Mammary epithelial cell (primary cell): ENCODE measurements at regions of chr5 and their contacts with region 1.

Region 1: GRCh38 chr5:8908055-8908683 is 637.7 kb downstream of the SEMA5A start:
- DNase-seq: peak; percentile 17
- H3K4me3 ChIP-seq: no peak overlapping the region
- H3K27ac ChIP-seq: peak overlapping the region; percentile 100
- H3K4me1 ChIP-seq: peaks cover 42% of the 10 kb centered on the region
- H3K27me3 ChIP-seq: no peaks in the 10 kb centered on the region
- CTCF ChIP-seq: peak; percentile 74 to 89

Region 2: DNA sequence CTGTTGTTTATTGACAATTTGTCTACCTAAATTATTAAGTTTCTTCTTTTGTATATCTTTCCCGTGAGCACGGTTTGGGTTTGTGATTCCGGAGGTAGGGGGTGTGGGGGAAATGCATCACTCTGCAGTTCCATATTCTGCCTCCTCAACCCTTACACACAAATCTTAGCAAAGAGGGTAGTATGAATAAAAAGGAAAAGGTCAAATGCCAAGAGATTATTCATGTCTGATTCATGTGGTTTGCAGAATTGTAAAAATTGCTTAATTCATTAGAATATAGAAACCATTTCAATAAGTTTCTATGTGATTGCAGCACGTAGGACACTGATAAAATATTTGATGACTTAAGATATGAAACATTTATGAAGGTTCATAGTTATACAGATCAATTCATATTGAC is 35.8 kb after region 1 on chr5:
- CTCF ChIA-PET with region 1: no interaction called
- dilution Hi-C with region 1: no loop called
- in situ Hi-C with region 1: no loop called
- intact Hi-C with region 1: loop called (anchors 2 kb)
- DNase-seq: peak; percentile 51
- H3K4me3 ChIP-seq: no peak overlapping the region
- H3K27ac ChIP-seq: no peak overlapping the region
- H3K4me1 ChIP-seq: peaks cover 9% of the 10 kb centered on the region
- H3K27me3 ChIP-seq: no peaks in the 10 kb centered on the region
- CTCF ChIP-seq: no peak

Region 3: GRCh38 chr5:8981496-8981895 is 73.3 kb after region 1 on chr5:
- CTCF ChIA-PET with region 1: no interaction called
- dilution Hi-C with region 1: no loop called
- in situ Hi-C with region 1: no loop called
- intact Hi-C with region 1: loop called (anchors 1 kb)
- DNase-seq: peak; percentile 87
- H3K4me3 ChIP-seq: no peak overlapping the region
- H3K27ac ChIP-seq: peak overlapping the region; percentile 33
- H3K4me1 ChIP-seq: peaks cover 21% of the 10 kb centered on the region
- H3K27me3 ChIP-seq: no peaks in the 10 kb centered on the region
- CTCF ChIP-seq: peak in 1 of 2 donors; percentile 6

Region 4: GRCh38 chr5:9015260-9015936 is 107.2 kb after region 1 on chr5:
- CTCF ChIA-PET with region 1: no interaction called
- dilution Hi-C with region 1: no loop called
- in situ Hi-C with region 1: no loop called
- intact Hi-C with region 1: loop called (anchors 10 kb)
- DNase-seq: no peak
- H3K4me3 ChIP-seq: no peak overlapping the region
- H3K27ac ChIP-seq: no peak overlapping the region
- H3K4me1 ChIP-seq: peaks cover 22% of the 10 kb centered on the region
- H3K27me3 ChIP-seq: no peaks in the 10 kb centered on the region
- CTCF ChIP-seq: no peak

Region 5: DNA sequence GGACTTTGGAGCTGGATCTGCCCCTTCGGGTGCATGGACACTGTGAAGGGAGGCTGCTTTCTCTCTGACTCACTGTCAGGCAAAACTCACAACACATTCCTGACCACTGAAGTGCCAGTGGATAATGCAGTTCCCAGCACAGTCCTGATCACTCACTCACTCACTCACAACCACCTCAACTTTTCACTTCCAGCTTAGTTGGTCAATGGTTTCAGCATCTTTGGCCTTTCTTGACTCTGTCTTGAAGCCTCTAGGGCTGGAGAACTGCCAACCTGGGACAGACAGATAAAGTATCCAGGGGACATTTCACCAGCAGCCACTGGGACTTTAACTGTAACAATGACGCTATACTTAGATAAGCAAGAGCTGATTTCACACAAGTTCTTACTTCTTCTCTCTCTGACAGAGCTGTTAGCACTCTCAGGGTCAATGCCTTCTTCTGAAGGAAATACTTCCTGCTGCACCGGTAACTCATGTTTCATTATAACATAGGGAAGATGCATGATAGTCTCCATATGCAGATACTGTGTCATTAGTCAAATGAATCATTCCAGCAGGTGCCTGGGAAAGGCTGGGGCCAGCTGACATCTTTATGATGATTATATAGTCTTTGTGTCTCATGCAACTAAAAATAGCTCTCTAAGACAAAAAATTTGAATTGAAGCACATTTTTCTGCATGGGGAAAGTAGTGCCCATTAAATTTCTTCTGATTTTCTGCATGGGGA is 138.8 kb after region 1 on chr5:
- CTCF ChIA-PET with region 1: no interaction called
- dilution Hi-C with region 1: no loop called
- in situ Hi-C with region 1: no loop called
- intact Hi-C with region 1: loop called (anchors 1 kb)
- DNase-seq: peak; percentile 98
- H3K4me3 ChIP-seq: no peak overlapping the region
- H3K27ac ChIP-seq: peak overlapping the region; percentile 82
- H3K4me1 ChIP-seq: peaks cover 24% of the 10 kb centered on the region
- H3K27me3 ChIP-seq: no peaks in the 10 kb centered on the region
- CTCF ChIP-seq: no peak

Region 6: DNA sequence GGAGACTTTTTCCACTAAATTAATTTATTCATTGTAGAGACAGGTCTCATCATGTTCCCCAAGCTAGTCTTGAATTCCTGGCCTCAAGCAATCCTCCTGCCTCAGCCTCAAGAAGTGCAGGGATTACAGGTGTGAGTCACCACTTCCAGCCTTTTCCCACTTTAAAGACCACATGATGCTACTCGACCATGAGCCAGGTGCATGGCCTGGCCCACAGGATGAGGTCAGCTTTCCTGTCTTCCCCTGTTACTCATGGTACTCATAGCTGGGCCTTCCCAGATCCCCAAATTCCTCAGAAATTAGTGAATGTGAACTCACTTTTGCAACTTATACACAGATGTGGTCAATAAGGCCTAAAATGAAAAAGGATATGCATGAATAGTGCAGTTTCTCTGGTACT is 241.8 kb after region 1 on chr5:
- CTCF ChIA-PET with region 1: no interaction called
- dilution Hi-C with region 1: no loop called
- in situ Hi-C with region 1: no loop called
- intact Hi-C with region 1: loop called (anchors 1 kb)
- DNase-seq: peak; percentile 99
- H3K4me3 ChIP-seq: no peak overlapping the region
- H3K27ac ChIP-seq: peak overlapping the region; percentile 79
- H3K4me1 ChIP-seq: peaks cover 27% of the 10 kb centered on the region
- H3K27me3 ChIP-seq: no peaks in the 10 kb centered on the region
- CTCF ChIP-seq: no peak